Heart left ventricle (tissue), 16 donors: ENCODE measurements at regions of chr18 and their contacts with region 1.

Region 1: GRCh38 chr18:78984941-78985784 is 5.5 kb downstream of the SALL3 start:
- DNase-seq: no peak
- ATAC-seq: peak in 2 of 4 donors; percentile 30 to 33
- H3K4me3 ChIP-seq: no peak overlapping the region
- H3K27ac ChIP-seq: no peak overlapping the region
- H3K4me1 ChIP-seq: peaks cover 0 to 12% (median 5%) of the 10 kb centered on the region in 12 donors
- H3K27me3 ChIP-seq: peaks cover 58 to 100% (median 86%) of the 10 kb centered on the region in 9 donors
- CTCF ChIP-seq: peak in 1 of 12 donors; percentile 14
- POLR2A ChIP-seq: no peak

Region 2: GRCh38 chr18:77754475-77755044 is 1230.6 kb before region 1 on chr18:
- intact Hi-C with region 1: loop called in 1 of 10 experiments (anchors 5 kb)
- DNase-seq: no peak
- ATAC-seq: no peak
- H3K4me3 ChIP-seq: no peak overlapping the region
- H3K27ac ChIP-seq: no peak overlapping the region
- H3K4me1 ChIP-seq: no peaks in the 10 kb centered on the region
- H3K27me3 ChIP-seq: peaks cover 0 to 30% (median 5%) of the 10 kb centered on the region in 9 donors
- CTCF ChIP-seq: no peak
- POLR2A ChIP-seq: no peak

Region 3: GRCh38 chr18:77899972-77900754 is 1085.0 kb before region 1 on chr18:
- intact Hi-C with region 1: loop called in 3 of 10 experiments (anchors 5 to 10 kb)
- DNase-seq: peak in 2 of 5 donors; percentile 40 to 72
- ATAC-seq: peak; percentile 26 to 94 (median 69)
- H3K4me3 ChIP-seq: peak overlapping the region in 9 of 12 donors; percentile 11 to 51 (median 33)
- H3K27ac ChIP-seq: no peak overlapping the region
- H3K4me1 ChIP-seq: peaks cover 0 to 8% (median 4%) of the 10 kb centered on the region in 12 donors
- H3K27me3 ChIP-seq: peaks cover 0 to 42% (median 10%) of the 10 kb centered on the region in 9 donors
- CTCF ChIP-seq: peak; percentile 50 to 91 (median 66)
- POLR2A ChIP-seq: no peak

Region 4: DNA sequence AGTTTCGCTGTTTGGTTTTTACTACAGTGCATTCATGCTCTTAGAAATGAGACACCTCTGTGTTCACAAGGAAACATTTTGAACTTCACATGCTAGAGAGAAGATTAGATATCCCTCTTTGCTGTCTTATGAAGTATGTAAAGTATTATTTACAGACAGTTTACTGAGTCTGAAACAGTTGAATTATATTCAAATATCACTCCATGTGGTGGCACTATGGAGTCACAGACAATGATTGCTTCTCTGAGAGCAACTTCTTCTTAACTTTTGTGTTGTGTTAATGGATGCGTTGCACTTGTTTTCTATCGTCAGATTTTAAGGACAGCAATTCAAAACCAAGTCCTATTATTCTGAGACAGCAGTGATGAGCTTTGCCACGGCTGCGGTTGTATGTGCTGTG is 911.9 kb before region 1 on chr18:
- intact Hi-C with region 1: loop called in 1 of 10 experiments (anchors 10 kb)
- DNase-seq: no peak
- ATAC-seq: no peak
- H3K4me3 ChIP-seq: no peak overlapping the region
- H3K27ac ChIP-seq: no peak overlapping the region
- H3K4me1 ChIP-seq: peaks cover 0 to 8% (median 0%) of the 10 kb centered on the region in 12 donors
- H3K27me3 ChIP-seq: peaks cover 0 to 32% (median 0%) of the 10 kb centered on the region in 9 donors
- CTCF ChIP-seq: peak in 6 of 12 donors; percentile 6 to 35 (median 32)
- POLR2A ChIP-seq: no peak